Vagina (tissue), 2 donors: ENCODE measurements at regions of chr3 and their contacts with region 1.

Region 1: GRCh38 chr3:16290007-16290826 is 25.2 kb downstream of the OXNAD1 start:
- DNase-seq: no peak
- H3K4me3 ChIP-seq: no peak overlapping the region
- H3K27ac ChIP-seq: no peak overlapping the region
- H3K4me1 ChIP-seq: no peaks in the 10 kb centered on the region
- H3K27me3 ChIP-seq: no peaks in the 10 kb centered on the region
- CTCF ChIP-seq: peak; percentile 44 to 92 (median 77)
- POLR2A ChIP-seq: no peak

Region 2: DNA sequence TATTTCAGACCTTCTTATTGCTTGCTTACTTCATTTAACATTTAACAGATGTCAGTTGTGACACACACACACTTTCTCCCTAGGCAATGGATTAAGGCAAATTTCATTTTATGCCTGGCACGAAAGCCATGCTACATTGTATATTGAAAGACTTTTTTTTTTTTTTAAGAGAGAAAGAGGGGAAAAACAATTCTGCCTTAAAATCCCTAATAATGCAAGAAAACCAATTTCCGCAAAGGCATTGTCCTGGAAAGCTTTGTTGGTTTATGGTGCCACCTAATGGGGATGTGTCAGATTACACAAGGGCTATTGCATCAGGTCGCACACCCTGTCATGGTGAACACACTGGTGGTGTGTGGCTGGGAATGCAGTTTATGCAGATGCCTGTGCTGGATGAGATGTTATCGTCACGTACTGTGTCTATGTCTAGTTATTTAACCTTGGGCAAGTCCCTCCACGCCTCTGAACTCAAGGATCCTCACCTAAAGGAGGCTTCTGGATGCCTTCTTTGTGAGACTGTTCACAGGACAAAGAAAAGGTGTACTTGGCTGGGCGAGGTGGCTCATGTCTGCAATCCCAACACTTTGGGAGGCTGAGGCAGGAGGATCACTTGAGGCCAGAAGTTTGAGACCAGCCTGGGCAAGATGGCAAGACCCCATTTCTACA is 260.6 kb after region 1 on chr3:
- intact Hi-C with region 1: loop called (anchors 5 kb)
- DNase-seq: peak in 1 of 2 donors; percentile 87
- H3K4me3 ChIP-seq: no peak overlapping the region
- H3K27ac ChIP-seq: no peak overlapping the region
- H3K4me1 ChIP-seq: peaks cover 6% of the 10 kb centered on the region
- H3K27me3 ChIP-seq: no peaks in the 10 kb centered on the region
- CTCF ChIP-seq: peak; percentile 72 to 91 (median 87)
- POLR2A ChIP-seq: no peak